ENCODE measurements at regions of chr3 and their contacts with region 1.

Region 1: DNA sequence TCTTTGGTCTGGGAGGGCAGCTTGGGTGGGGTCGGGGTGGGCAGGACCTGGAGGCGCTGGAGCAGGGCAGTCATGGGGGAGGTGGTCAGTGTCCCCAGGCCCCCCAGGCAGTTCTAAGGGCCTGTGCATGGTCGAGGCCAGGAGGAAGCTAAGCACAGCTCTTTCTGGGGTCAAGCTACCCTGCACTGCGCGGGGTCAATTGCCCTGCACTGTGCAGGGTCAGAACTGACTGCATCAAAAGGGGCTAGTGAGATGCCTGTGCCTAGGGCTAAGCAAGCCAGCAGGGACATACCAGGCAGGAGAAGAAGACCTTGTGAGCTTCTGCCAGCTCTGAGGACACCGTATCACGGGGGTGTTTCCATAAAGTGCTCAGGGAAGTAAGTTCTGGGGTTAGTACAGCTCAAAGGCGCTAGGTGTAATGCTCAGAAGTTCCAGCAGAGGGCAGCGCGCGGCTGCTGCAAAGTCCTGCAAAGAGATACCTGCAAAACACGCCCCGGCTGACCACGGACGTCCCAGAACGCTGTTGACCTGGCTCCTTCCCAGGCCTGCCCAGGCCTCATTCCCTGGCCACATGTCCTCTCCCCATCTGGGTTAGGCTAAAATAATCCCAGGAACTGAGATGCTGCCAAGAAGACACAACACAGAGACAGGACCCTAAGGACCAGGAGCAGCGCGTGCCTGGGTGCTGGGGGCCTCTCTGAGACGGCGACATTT is 18.8 kb upstream of the IQSEC1 start:
- DNase-seq: peak; percentile 88
- H3K4me3 ChIP-seq: no peak overlapping the region
- H3K27ac ChIP-seq: no peak overlapping the region
- H3K4me1 ChIP-seq: peaks cover 0 to 6% (median 0%) of the 10 kb centered on the region in 4 donors
- H3K27me3 ChIP-seq: no peaks in the 10 kb centered on the region
- CTCF ChIP-seq: peak; percentile 93 to 96 (median 96)
- EP300 ChIP-seq: no peak
- POLR2A ChIP-seq: no peak

Region 2: GRCh38 chr3:13452490-13453335 is 360.7 kb after region 1 on chr3:
- in situ Hi-C with region 1: loop called (anchors 10 to 25 kb)
- intact Hi-C with region 1: loop called (anchors 10 kb)
- DNase-seq: peak; percentile 24
- H3K4me3 ChIP-seq: peak overlapping the region in 3 of 4 donors; percentile 41 to 63 (median 46)
- H3K27ac ChIP-seq: peak overlapping the region; percentile 81 to 90 (median 88)
- H3K4me1 ChIP-seq: peaks cover 0 to 12% (median 9%) of the 10 kb centered on the region in 4 donors
- H3K27me3 ChIP-seq: no peaks in the 10 kb centered on the region
- CTCF ChIP-seq: peak; percentile 57 to 76 (median 61)
- EP300 ChIP-seq: no peak
- POLR2A ChIP-seq: no peak

Region 3: GRCh38 chr3:13648060-13649001 is 556.3 kb after region 1 on chr3:
- in situ Hi-C with region 1: loop called in 2 of 4 experiments (anchors 25 kb)
- intact Hi-C with region 1: loop called (anchors 5 kb)
- DNase-seq: peak; percentile 79
- H3K4me3 ChIP-seq: no peak overlapping the region
- H3K27ac ChIP-seq: no peak overlapping the region
- H3K4me1 ChIP-seq: peaks cover 0 to 13% (median 1%) of the 10 kb centered on the region in 4 donors
- H3K27me3 ChIP-seq: peaks cover 10% of the 10 kb centered on the region
- CTCF ChIP-seq: peak; percentile 80 to 96 (median 94)
- EP300 ChIP-seq: no peak
- POLR2A ChIP-seq: no peak